B cell (primary cell): ENCODE measurements at regions of chr9 and their contacts with region 1.

Region 1: DNA sequence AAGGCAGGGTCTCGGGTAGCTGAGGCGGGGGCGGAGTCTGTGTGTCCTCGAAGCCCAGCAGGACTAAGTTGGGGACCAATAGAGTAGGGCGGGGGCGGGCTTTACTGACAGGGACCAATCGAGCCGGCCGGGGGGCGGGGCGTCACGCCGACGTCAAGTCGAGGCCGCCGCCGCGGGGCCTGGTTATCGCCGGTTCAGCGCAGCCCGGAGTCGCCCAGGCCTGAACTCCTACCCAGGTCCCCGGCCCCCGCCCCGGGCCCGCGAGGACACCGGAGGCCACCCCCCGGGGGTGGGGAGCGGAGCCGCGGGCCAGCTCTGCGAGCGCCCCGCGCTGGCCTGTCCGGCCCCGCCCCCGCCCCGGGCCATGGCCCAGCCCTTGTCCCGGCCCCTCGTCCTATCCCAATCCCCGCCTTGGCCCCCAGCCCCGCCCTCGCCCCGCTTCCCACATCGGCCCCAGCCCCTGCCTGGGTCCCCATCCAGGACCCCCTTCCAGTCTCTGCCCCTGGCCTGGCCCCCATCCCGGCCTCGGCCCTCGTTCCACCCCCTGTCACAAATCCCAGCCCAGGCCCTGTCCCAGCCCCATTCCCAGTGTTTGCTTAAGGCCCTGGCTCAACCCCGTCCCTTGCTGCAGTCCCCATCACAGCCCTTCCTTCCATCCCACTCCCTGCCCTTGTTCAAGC is at the start of gene TMEM8B:
- DNase-seq: peak; percentile 94
- ATAC-seq: peak; percentile 92
- H3K4me3 ChIP-seq: peak within 1 kb of the TSS; percentile 32 to 80 (median 78)
- H3K4me3 Mint-ChIP-seq: peak within 1 kb of the TSS; percentile 96
- H3K27ac ChIP-seq: peak within 1 kb of the TSS; percentile 60 to 78
- H3K27ac Mint-ChIP-seq: peak within 1 kb of the TSS; percentile 89
- H3K4me1 ChIP-seq: peaks cover 24 to 35% of the 10 kb centered on the region in 2 donors
- H3K4me1 Mint-ChIP-seq: peaks cover 44% of the 10 kb centered on the region
- H3K27me3 ChIP-seq: no peaks in the 10 kb centered on the region
- H3K27me3 Mint-ChIP-seq: no peaks in the 10 kb centered on the region
- CTCF ChIP-seq: no peak
- total RNA-seq, gene TMEM8B: 13.6 and 14.5 TPM in 2 replicates

Region 2: GRCh38 chr9:33823801-33824200 is 2005.4 kb before region 1 on chr9:
- CTCF ChIA-PET with region 1: no interaction called
- POLR2A ChIA-PET with region 1: no interaction called
- intact Hi-C with region 1: no loop called
- DNase-seq: no peak
- ATAC-seq: no peak
- H3K4me3 ChIP-seq: no peak overlapping the region
- H3K4me3 Mint-ChIP-seq: no peak overlapping the region
- H3K27ac ChIP-seq: no peak overlapping the region
- H3K27ac Mint-ChIP-seq: no peak overlapping the region
- H3K4me1 ChIP-seq: peaks cover 19 to 22% of the 10 kb centered on the region in 2 donors
- H3K4me1 Mint-ChIP-seq: peaks cover 32% of the 10 kb centered on the region
- H3K27me3 ChIP-seq: no peaks in the 10 kb centered on the region
- H3K27me3 Mint-ChIP-seq: no peaks in the 10 kb centered on the region
- CTCF ChIP-seq: no peak

Region 3: GRCh38 chr9:35748858-35749514 is 80.2 kb before region 1 on chr9 and contains the starts of genes GBA2 and RGP1:
- CTCF ChIA-PET with region 1: interaction called, 22 read pairs
- POLR2A ChIA-PET with region 1: interaction called, 3 read pairs
- intact Hi-C with region 1: no loop called
- DNase-seq: peak; percentile 82
- ATAC-seq: peak; percentile 83
- H3K4me3 ChIP-seq: peak within 1 kb of the TSS; percentile 73 to 92 (median 84)
- H3K4me3 Mint-ChIP-seq: peak within 1 kb of the TSS; percentile 96
- H3K27ac ChIP-seq: peak within 1 kb of the TSS; percentile 71 to 77
- H3K27ac Mint-ChIP-seq: peak within 1 kb of the TSS; percentile 96
- H3K4me1 ChIP-seq: peaks cover 37 to 41% of the 10 kb centered on the region in 2 donors
- H3K4me1 Mint-ChIP-seq: peaks cover 50% of the 10 kb centered on the region
- H3K27me3 ChIP-seq: no peaks in the 10 kb centered on the region
- H3K27me3 Mint-ChIP-seq: no peaks in the 10 kb centered on the region
- CTCF ChIP-seq: no peak
- total RNA-seq, gene GBA2: 137 and 158 TPM in 2 replicates
- total RNA-seq, gene RGP1: 42.3 and 44.3 TPM in 2 replicates

Region 4: GRCh38 chr9:35844716-35845270 is 15.6 kb after region 1 on chr9:
- CTCF ChIA-PET with region 1: interaction called, 54 read pairs
- POLR2A ChIA-PET with region 1: no interaction called
- intact Hi-C with region 1: loop called (anchors 1 kb)
- DNase-seq: peak; percentile 84
- ATAC-seq: peak; percentile 75
- H3K4me3 ChIP-seq: peak overlapping the region in 1 of 5 experiments; percentile 21
- H3K4me3 Mint-ChIP-seq: peak overlapping the region; percentile 29
- H3K27ac ChIP-seq: peak overlapping the region in 1 of 2 donors; percentile 11
- H3K27ac Mint-ChIP-seq: peak overlapping the region; percentile 23
- H3K4me1 ChIP-seq: peaks cover 71 to 82% of the 10 kb centered on the region in 2 donors
- H3K4me1 Mint-ChIP-seq: peaks cover 75% of the 10 kb centered on the region
- H3K27me3 ChIP-seq: no peaks in the 10 kb centered on the region
- H3K27me3 Mint-ChIP-seq: no peaks in the 10 kb centered on the region
- CTCF ChIP-seq: no peak

Region 5: DNA sequence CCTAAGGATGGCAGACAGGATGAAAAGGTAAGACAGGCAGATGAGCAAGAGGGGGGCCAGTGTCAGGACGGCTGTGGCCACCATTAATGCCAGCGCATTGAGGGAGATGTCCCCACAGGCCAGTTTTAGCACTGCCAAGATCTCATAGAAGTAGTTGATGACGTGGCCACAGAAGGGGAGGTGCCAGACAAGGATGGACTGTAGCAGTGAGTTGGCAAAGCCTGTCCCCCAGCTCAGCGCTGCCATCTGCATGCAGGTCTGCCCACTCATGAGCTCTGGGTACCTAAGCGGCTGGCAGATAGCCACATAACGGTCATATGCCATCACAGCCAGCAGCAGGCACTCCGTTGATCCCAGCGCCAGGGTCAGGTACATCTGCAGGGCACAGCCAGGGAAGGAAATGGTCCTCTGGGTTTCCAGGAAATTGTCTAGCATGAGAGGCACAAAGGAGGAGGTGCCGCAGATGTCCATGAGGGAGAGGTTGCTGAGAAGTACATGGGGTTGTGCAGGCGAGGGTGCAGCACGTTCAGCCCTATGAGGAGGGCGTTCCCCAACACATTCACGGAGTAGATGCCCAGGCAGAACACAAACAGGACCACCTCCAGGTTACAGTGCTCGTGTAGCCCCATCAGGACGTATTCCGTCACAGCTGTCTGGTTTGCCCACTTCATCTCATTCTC is 30.2 kb after region 1 on chr9:
- CTCF ChIA-PET with region 1: interaction called, 17 read pairs
- POLR2A ChIA-PET with region 1: no interaction called
- intact Hi-C with region 1: no loop called
- DNase-seq: peak; percentile 45
- ATAC-seq: peak; percentile 76
- H3K4me3 ChIP-seq: no peak overlapping the region
- H3K4me3 Mint-ChIP-seq: no peak overlapping the region
- H3K27ac ChIP-seq: no peak overlapping the region
- H3K27ac Mint-ChIP-seq: no peak overlapping the region
- H3K4me1 ChIP-seq: no peaks in the 10 kb centered on the region
- H3K4me1 Mint-ChIP-seq: no peaks in the 10 kb centered on the region
- H3K27me3 ChIP-seq: peaks cover 0 to 12% (median 3%) of the 10 kb centered on the region in 4 experiments
- H3K27me3 Mint-ChIP-seq: peaks cover 22% of the 10 kb centered on the region
- CTCF ChIP-seq: no peak

Region 6: DNA sequence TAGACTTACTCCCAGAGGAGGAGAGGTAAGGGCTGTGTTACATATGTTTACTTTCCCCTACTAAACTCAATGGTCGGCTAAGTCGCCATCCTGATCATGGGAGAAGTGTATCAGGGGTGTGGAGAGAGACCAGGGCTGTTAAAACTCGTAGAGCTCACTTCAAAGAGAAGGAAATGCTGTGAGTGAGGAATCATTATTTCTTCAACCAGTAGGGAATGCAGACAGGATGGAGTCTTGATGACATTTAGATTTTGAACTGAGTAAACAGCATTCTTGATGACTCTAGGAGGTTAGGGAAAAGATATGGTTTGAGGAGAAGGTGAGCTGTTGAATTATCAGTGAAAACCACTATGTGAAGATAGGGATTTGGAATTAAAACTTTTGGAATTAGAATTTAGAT is 224.7 kb after region 1 on chr9:
- CTCF ChIA-PET with region 1: no interaction called
- POLR2A ChIA-PET with region 1: no interaction called
- intact Hi-C with region 1: no loop called
- DNase-seq: no peak
- ATAC-seq: no peak
- H3K4me3 ChIP-seq: no peak overlapping the region
- H3K4me3 Mint-ChIP-seq: no peak overlapping the region
- H3K27ac ChIP-seq: no peak overlapping the region
- H3K27ac Mint-ChIP-seq: no peak overlapping the region
- H3K4me1 ChIP-seq: no peaks in the 10 kb centered on the region
- H3K4me1 Mint-ChIP-seq: no peaks in the 10 kb centered on the region
- H3K27me3 ChIP-seq: no peaks in the 10 kb centered on the region
- H3K27me3 Mint-ChIP-seq: no peaks in the 10 kb centered on the region
- CTCF ChIP-seq: no peak